ENCODE measurements at regions of chr12 and their contacts with region 1.

Region 1: GRCh38 chr12:53791735-53792326 is 40.1 kb upstream of the CISTR start:
- H3K4me3 ChIP-seq: no peak overlapping the region
- H3K27ac ChIP-seq: no peak overlapping the region
- H3K4me1 ChIP-seq: no peaks in the 10 kb centered on the region
- CTCF ChIP-seq: no peak

Region 2: GRCh38 chr12:53451661-53452158 is 340.1 kb before region 1 on chr12 and contains the start of gene PCBP2:
- CTCF ChIA-PET with region 1: no interaction called
- POLR2A ChIA-PET with region 1: no interaction called
- H3K4me3 ChIP-seq: peak within 1 kb of the TSS; percentile 99
- H3K27ac ChIP-seq: peak within 1 kb of the TSS; percentile 98
- H3K4me1 ChIP-seq: peaks cover 3% of the 10 kb centered on the region
- CTCF ChIP-seq: peak; percentile 99

Region 3: GRCh38 chr12:53618275-53618674 is 173.6 kb before region 1 on chr12:
- CTCF ChIA-PET with region 1: no interaction called
- POLR2A ChIA-PET with region 1: no interaction called
- H3K4me3 ChIP-seq: no peak overlapping the region
- H3K27ac ChIP-seq: no peak overlapping the region
- H3K4me1 ChIP-seq: no peaks in the 10 kb centered on the region
- CTCF ChIP-seq: no peak

Region 4: GRCh38 chr12:53770281-53770680 is 21.6 kb before region 1 on chr12:
- CTCF ChIA-PET with region 1: interaction called, 13 read pairs
- POLR2A ChIA-PET with region 1: no interaction called
- H3K4me3 ChIP-seq: no peak overlapping the region
- H3K27ac ChIP-seq: no peak overlapping the region
- H3K4me1 ChIP-seq: peaks cover 3% of the 10 kb centered on the region
- CTCF ChIP-seq: no peak

Region 5: GRCh38 chr12:53775478-53776145 is 16.2 kb before region 1 on chr12:
- CTCF ChIA-PET with region 1: interaction called, 13 read pairs
- POLR2A ChIA-PET with region 1: no interaction called
- H3K4me3 ChIP-seq: no peak overlapping the region
- H3K27ac ChIP-seq: no peak overlapping the region
- H3K4me1 ChIP-seq: peaks cover 9% of the 10 kb centered on the region; the same call in 1 of the 2 replicates
- CTCF ChIP-seq: no peak

Region 6: GRCh38 chr12:53806721-53807120 is 14.9 kb after region 1 on chr12:
- CTCF ChIA-PET with region 1: interaction called, 29 read pairs
- POLR2A ChIA-PET with region 1: no interaction called
- H3K4me3 ChIP-seq: no peak overlapping the region
- H3K27ac ChIP-seq: peak overlapping the region; percentile 37; the same call in 1 of the 2 replicates
- H3K4me1 ChIP-seq: peaks cover 19% of the 10 kb centered on the region
- CTCF ChIP-seq: no peak

Region 7: GRCh38 chr12:53871362-53871761 is 79.5 kb after region 1 on chr12:
- CTCF ChIA-PET with region 1: no interaction called
- POLR2A ChIA-PET with region 1: no interaction called
- H3K4me3 ChIP-seq: no peak overlapping the region
- H3K27ac ChIP-seq: no peak overlapping the region
- H3K4me1 ChIP-seq: peaks cover 18% of the 10 kb centered on the region
- CTCF ChIP-seq: no peak